ENCODE measurements at regions of chr10 and their contacts with region 1.

Region 1: GRCh38 chr10:110203500-110204455 is 3.6 kb upstream of the MXI1 start:
- DNase-seq: no peak
- ATAC-seq: no peak
- H3K4me3 ChIP-seq: no peak overlapping the region
- H3K27ac ChIP-seq: no peak overlapping the region
- H3K4me1 ChIP-seq: peaks cover 0 to 11% (median 4%) of the 10 kb centered on the region in 12 donors
- H3K27me3 ChIP-seq: no peaks in the 10 kb centered on the region
- CTCF ChIP-seq: no peak
- POLR2A ChIP-seq: no peak

Region 2: DNA sequence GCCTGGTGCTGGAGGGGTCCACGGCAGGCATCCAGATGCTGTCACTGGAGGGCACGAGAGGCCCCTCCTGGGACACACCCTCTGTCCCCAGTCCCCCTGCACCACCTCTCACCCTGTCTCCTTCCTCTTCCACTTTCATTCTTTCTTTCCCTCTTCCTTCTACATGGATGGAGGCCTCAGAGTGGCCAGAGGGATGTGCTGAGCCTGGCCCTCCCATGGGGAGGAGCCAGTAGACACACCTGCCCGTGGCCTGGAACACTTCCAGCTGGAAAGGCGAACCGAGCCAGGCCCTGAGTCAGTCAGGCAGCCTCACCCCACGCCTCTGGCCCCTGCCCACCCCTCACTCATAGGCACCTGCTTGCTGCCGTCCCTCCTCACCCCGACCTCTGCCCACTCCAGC is 52.3 kb before region 1 on chr10:
- intact Hi-C with region 1: loop called in 2 of 10 experiments (anchors 5 to 10 kb)
- DNase-seq: no peak
- ATAC-seq: peak in 1 of 4 donors; percentile 21
- H3K4me3 ChIP-seq: no peak overlapping the region
- H3K27ac ChIP-seq: no peak overlapping the region
- H3K4me1 ChIP-seq: peaks cover 0 to 9% (median 0%) of the 10 kb centered on the region in 12 donors
- H3K27me3 ChIP-seq: peaks cover 0 to 4% (median 0%) of the 10 kb centered on the region in 9 donors
- CTCF ChIP-seq: no peak
- POLR2A ChIP-seq: no peak